ENCODE measurements at regions of chr20 and their contacts with region 1.

Region 1: DNA sequence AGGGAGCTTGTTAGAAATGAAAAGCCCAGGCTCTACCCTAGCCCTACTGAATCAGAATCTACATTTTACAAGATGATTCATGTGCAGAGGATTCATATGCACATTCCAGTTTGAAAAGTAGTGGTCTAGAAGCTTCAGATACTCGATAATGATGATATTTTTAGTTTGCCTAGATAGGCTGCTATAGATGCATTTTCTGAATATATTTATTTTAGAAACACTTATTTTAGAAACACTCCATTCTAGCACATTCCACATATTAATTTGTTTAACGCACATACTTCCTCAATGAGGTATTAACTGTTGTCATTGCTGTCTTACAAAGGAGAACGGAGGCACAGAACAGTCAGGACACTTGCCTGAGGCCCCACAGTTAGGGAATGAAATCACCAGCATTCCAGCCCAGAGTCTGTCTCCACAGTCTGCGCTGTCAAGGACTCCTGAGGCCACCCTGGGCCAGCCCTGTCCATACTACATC is 64.4 kb downstream of the SNAP25 start:
- DNase-seq: no peak
- H3K4me3 ChIP-seq: no peak overlapping the region
- H3K27ac ChIP-seq: no peak overlapping the region
- H3K4me1 ChIP-seq: no peaks in the 10 kb centered on the region
- H3K27me3 ChIP-seq: no peaks in the 10 kb centered on the region
- CTCF ChIP-seq: no peak
- POLR2A ChIP-seq: no peak

Region 2: DNA sequence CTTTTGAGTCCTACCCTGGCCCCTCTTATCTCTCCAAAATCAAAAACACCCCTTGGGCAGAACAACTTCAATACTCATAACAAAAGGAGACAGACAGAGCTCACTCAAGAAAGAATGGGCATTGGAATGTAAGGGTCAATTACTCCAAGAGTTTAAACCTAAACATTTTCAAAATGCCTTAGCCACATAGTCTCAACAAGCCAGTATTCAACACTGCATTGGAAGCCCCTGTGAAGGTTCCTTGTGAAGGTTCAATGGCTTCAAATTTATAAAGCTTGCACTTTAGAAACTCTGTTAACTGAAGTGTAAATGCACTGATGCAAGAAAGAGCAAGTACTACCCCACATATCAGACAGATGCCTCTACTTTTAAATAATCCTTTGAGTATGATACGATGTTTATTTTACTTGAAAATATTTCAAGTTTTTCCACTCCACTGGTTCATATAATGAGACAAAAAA is 907.8 kb before region 1 on chr20:
- intact Hi-C with region 1: no loop called
- DNase-seq: no peak
- H3K4me3 ChIP-seq: no peak overlapping the region
- H3K27ac ChIP-seq: no peak overlapping the region
- H3K4me1 ChIP-seq: no peaks in the 10 kb centered on the region
- H3K27me3 ChIP-seq: no peaks in the 10 kb centered on the region
- CTCF ChIP-seq: no peak
- POLR2A ChIP-seq: no peak

Region 3: GRCh38 chr20:10219452-10219791 is 63.6 kb before region 1 on chr20:
- intact Hi-C with region 1: no loop called
- DNase-seq: no peak
- H3K4me3 ChIP-seq: peak overlapping the region; percentile 25 to 41
- H3K27ac ChIP-seq: no peak overlapping the region
- H3K4me1 ChIP-seq: peaks cover 21% of the 10 kb centered on the region
- H3K27me3 ChIP-seq: no peaks in the 10 kb centered on the region
- CTCF ChIP-seq: no peak
- POLR2A ChIP-seq: no peak

Region 4: DNA sequence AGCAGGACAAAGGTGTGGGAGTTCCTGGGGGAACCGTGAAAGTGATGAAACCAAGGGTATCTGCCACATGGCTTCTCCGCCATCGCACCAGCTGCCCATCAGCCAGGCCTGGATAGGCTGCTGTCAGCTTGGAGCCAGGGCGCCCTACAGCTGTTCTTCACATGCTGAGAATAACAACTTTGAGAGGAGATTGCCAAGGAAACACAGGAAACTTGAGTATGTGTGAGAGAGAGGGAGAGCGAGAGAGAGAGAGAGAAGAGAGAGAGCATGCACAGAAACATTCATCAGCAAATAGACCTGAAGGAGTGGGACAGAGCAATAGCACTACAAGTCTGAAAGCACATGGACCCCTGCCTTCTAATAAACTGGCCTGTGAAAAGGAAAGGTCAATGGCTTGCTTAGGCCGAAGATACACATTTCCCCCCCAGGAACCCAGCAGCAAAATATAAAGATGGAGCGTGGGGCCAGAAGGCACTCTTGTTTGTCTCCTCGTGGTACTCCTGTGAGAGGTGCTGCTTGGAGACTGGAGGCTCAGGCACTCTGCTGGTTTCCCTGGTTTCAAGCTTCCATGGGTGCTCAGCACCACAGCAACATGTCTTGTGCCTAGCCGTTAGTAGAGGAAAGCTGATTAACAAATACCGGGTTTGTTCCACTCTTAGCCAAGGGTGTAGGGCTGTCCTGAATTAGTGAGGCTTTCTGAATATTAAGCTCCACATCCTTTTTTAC is 11.4 kb before region 1 on chr20:
- intact Hi-C with region 1: loop called (anchors 1 kb)
- DNase-seq: no peak
- H3K4me3 ChIP-seq: no peak overlapping the region
- H3K27ac ChIP-seq: no peak overlapping the region
- H3K4me1 ChIP-seq: no peaks in the 10 kb centered on the region
- H3K27me3 ChIP-seq: no peaks in the 10 kb centered on the region
- CTCF ChIP-seq: no peak
- POLR2A ChIP-seq: no peak